ENCODE measurements at regions of chrX and their contacts with region 1.

Region 1: DNA sequence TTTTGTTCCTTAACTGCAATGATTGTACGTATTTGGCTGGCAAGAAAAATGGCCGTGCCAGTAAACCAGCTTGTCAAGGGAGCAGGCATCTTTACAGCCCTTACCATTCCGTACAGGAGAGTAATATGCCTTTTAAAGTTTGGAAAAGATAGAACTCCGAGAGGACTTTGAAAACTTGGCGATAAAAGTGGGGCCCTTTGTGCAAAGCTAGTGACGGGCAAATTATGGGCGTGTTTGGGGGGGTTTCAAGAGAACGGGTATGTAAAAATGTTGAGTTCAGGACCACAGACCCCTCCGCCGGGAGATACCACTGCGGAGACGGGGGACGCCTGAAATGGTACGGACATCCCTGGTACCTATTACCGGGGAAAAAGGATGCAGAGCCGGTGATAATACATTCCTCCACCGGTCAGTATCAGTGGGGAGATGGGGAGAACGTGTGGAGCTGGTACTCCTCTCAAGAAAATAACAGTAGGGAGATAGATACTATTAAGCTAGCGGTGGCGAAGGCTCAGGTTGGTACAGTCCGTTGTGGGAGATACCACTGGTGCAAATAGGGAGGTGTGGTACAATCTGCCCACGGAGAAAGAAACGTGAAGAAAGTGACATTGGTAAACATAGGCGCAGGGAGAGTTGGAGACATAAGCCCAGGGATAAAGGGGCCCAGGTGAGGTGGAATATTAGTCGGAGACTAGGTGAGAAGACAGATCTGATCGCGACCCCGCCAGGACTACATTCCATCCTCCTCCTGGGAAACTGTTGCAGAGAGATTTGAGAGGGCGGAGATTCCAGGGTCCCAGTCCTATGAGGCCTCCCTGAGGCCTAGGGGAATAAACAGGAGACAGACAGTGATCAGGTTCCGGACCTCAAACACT is 14.5 kb downstream of the SPACA5 start:
- DNase-seq: peak; percentile 86
- ATAC-seq: peak; percentile 56
- H3K4me3 Mint-ChIP-seq: peak overlapping the region; percentile 87
- H3K27ac Mint-ChIP-seq: peak overlapping the region; percentile 98
- H3K4me1 Mint-ChIP-seq: peaks cover 16% of the 10 kb centered on the region
- H3K27me3 Mint-ChIP-seq: no peaks in the 10 kb centered on the region
- CTCF ChIP-seq: no peak

Region 2: GRCh38 chrX:47078129-47079043 is 942.9 kb before region 1 on chrX and contains the start of gene RGN:
- CTCF ChIA-PET with region 1: no interaction called
- POLR2A ChIA-PET with region 1: no interaction called
- intact Hi-C with region 1: no loop called
- DNase-seq: no peak
- ATAC-seq: no peak
- H3K4me3 Mint-ChIP-seq: no peak within 1 kb of the TSS
- H3K27ac Mint-ChIP-seq: no peak within 1 kb of the TSS
- H3K4me1 Mint-ChIP-seq: no peaks in the 10 kb centered on the region
- H3K27me3 Mint-ChIP-seq: no peaks in the 10 kb centered on the region
- CTCF ChIP-seq: no peak
- total RNA-seq, gene RGN: not detected

Region 3: GRCh38 chrX:47836164-47837072 is 184.8 kb before region 1 on chrX and contains the start of gene ZNF81:
- CTCF ChIA-PET with region 1: interaction called, 27 read pairs
- POLR2A ChIA-PET with region 1: no interaction called
- intact Hi-C with region 1: loop called (anchors 2 kb)
- DNase-seq: peak; percentile 95
- ATAC-seq: peak; percentile 94
- H3K4me3 Mint-ChIP-seq: peak within 1 kb of the TSS; percentile 98
- H3K27ac Mint-ChIP-seq: peak within 1 kb of the TSS; percentile 97
- H3K4me1 Mint-ChIP-seq: peaks cover 21% of the 10 kb centered on the region
- H3K27me3 Mint-ChIP-seq: no peaks in the 10 kb centered on the region
- CTCF ChIP-seq: no peak
- total RNA-seq, gene ZNF81: 5.4 to 6.3 TPM

Region 4: GRCh38 chrX:47854474-47854873 is 166.8 kb before region 1 on chrX:
- CTCF ChIA-PET with region 1: interaction called, 4 read pairs
- POLR2A ChIA-PET with region 1: no interaction called
- intact Hi-C with region 1: loop called (anchors 1 kb)
- DNase-seq: peak; percentile 47
- ATAC-seq: no peak
- H3K4me3 Mint-ChIP-seq: no peak overlapping the region
- H3K27ac Mint-ChIP-seq: no peak overlapping the region
- H3K4me1 Mint-ChIP-seq: peaks cover 4% of the 10 kb centered on the region
- H3K27me3 Mint-ChIP-seq: no peaks in the 10 kb centered on the region
- CTCF ChIP-seq: peak; percentile 31

Region 5: DNA sequence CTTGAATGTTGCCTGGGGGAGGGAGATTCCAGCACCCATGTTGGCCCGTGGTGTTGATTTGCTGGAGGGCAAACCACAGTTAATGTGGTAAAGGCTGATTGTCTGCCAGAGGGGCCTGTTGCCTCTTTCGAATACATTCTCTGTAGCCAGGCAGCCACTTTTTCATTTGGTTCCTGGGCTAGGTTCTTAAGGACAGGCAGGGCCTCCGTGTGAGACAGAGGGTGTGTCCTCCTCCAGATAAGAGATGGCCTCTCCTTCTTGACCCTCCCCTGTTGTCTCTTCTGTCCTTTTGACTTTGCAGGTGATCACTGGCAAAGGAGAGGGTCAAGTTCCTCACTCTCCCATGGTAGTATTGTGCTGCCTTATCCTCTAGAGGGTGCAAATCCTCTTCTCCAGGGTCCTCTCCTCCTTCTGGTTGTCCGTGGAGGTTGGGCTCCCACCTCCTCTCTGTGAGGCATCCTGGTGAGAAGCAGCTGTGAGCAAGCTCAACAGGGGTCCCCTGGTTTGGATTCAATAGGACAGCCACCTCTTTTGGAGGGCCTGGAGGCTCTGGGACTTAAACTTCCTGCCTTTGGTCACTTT is 62.4 kb before region 1 on chrX:
- CTCF ChIA-PET with region 1: interaction called, 15 read pairs
- POLR2A ChIA-PET with region 1: no interaction called
- intact Hi-C with region 1: no loop called
- DNase-seq: peak; percentile 30
- ATAC-seq: peak; percentile 73
- H3K4me3 Mint-ChIP-seq: no peak overlapping the region
- H3K27ac Mint-ChIP-seq: no peak overlapping the region
- H3K4me1 Mint-ChIP-seq: no peaks in the 10 kb centered on the region
- H3K27me3 Mint-ChIP-seq: no peaks in the 10 kb centered on the region
- CTCF ChIP-seq: peak; percentile 36